Prostate gland (tissue), 2 donors: ENCODE measurements at regions of chr2 and their contacts with region 1.

Region 1: DNA sequence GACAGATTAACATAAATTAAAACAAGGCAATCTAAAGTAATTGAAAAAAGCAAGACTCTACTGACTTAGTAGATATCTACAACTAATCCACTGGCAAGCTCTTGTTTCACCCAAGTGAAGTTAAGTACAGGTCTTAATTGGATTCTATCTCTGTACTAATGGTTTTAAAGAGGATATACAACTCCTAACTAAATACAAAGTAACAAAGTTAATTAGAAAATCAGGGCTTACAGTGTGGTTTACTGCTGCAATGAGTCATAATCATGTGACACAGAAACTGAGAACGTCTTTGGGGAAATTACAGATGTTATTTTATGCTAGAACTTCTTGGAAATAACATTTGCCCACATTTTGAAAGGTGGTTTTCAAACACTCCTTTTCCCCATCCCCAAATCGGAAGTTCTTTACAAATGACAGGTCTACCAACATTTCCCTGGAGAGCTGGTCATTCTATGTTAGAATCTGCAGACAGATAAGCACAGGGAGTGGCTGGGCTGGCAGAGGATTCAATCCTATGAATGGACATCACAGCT is 245.3 kb downstream of the STK39 start:
- DNase-seq: no peak
- H3K4me3 ChIP-seq: no peak overlapping the region
- H3K27ac ChIP-seq: no peak overlapping the region
- H3K4me1 ChIP-seq: no peaks in the 10 kb centered on the region
- H3K27me3 ChIP-seq: no peaks in the 10 kb centered on the region
- CTCF ChIP-seq: no peak
- POLR2A ChIP-seq: no peak

Region 2: GRCh38 chr2:166700079-166700478 is 1302.0 kb before region 1 on chr2:
- intact Hi-C with region 1: loop called (anchors 10 kb)
- DNase-seq: no peak
- H3K4me3 ChIP-seq: no peak overlapping the region
- H3K27ac ChIP-seq: no peak overlapping the region
- H3K4me1 ChIP-seq: no peaks in the 10 kb centered on the region
- H3K27me3 ChIP-seq: no peaks in the 10 kb centered on the region
- CTCF ChIP-seq: no peak
- POLR2A ChIP-seq: no peak

Region 3: DNA sequence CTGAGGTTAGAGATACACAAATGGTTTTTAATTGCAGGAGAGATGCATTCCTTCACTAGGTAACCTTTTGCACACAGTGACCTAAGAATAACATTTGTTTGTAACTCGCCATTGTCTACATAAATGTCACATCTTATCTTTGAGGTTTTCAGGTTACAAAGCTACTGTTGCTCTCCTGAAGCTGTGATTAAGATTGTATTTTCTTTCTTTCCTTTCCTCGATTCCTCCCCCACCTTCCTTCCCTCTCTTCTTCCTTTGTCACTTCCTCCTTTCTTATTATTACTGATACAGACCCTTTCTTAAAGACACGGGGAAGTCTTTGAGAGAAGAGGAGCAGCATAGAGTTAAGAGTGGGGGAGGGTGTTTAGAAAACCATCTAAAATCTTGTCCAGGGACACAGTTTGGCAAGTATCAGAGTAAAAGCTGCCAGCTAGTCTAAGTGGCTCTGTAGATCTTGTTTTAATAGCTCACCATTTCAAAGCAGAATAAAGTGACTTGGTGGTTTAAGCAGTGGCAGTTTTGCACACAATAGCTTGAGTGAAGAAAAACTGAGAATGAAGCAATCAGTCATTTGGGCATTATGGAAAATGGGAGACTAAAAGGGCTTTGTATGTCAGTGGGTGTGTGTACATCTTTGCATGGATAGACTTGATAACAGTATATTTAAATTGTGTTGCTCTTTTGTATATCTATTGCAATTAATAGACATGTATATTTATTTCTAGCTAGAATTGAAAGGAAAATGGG is 464.9 kb after region 1 on chr2:
- intact Hi-C with region 1: no loop called
- DNase-seq: no peak
- H3K4me3 ChIP-seq: no peak overlapping the region
- H3K27ac ChIP-seq: no peak overlapping the region
- H3K4me1 ChIP-seq: peaks cover 8% of the 10 kb centered on the region
- H3K27me3 ChIP-seq: no peaks in the 10 kb centered on the region
- CTCF ChIP-seq: no peak
- POLR2A ChIP-seq: no peak